ENCODE measurements at regions of chr22 and their contacts with region 1.

Region 1: DNA sequence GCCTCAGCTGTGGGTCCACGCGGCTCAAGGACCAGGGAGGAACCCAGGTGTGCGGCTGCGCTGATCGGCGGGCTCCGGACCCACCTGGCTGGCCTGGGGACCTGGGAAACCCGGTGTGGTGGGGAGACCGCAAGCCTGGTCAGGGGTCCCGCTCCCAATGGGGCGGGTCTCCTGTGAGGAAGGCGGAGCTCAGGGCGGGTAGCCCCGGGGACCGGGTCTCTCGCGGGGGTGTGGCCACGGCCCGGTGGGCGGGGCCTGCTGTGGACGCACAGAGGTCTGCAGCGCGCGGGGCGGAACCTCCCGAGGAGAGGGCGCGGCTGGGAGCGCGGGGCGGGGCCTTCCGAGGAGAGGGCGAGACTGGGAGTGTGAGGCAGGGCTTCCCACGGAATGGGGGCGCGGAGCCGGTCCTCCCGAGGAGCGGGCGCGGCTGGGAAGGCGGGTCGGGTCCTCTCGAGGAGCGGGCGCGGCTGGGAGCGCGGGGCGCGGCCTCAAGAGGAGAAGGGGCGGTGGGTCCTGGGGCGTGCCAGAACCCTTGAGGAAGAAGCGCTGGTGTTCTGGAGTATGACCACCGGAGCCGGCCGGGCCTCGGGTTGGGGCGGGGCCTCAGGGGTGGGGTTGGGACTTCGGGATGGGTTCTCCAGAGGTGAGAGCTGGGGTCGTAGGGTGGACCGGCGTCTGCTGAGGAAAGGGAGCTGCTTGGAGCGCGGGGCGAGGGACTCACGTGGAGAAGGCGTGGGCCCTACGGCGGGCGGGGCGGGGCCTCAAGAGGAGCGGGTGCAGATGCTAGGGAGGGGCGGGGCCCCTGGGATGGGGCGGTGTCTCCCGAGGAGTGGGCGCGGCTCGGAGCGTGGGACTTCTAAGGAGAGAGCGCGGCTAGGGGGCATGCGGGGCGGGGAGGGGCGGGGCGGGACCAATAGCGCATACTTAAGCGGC is 20.8 kb downstream of the DGCR6L start:
- DNase-seq: peak; percentile 85
- H3K4me3 Mint-ChIP-seq: peak overlapping the region; percentile 80
- H3K27ac Mint-ChIP-seq: peak overlapping the region; percentile 48
- H3K4me1 Mint-ChIP-seq: no peaks in the 10 kb centered on the region
- H3K27me3 Mint-ChIP-seq: peaks cover 6% of the 10 kb centered on the region

Region 2: DNA sequence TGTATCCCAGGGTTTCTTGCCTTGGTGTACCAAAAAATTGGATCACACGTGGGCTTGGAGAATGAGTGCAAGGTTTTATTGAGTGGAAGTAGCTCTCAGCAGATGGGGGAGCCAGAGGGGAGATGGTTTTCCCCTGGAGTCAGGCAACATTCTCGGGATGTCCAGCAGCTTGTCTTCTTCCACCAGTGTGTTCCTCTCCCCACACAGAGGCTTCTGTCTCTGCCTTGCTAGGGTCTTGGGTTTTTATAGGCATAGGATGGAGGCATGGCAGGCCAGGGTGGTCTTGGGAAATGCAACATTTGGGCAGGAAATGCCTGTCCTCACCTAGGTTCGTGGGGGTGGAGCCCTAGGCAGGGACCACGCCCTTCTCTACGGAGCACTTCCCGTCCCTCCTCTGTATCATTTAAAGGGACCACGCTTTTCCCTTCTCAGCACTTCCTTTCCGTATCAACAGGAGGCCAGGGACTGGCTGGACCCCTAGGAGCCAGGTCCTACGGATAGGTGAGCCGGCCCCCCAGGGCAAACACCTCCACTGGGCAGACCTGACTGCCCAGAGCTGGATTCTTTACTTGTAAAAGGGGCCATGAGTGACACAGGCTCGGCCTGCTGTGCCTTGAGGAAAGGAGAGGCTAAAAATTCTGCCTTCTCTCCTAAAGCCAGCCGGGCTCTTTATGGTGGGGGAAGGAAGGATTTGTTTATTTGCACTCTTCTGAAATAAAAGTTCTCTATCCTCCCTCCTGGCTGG is 92.9 kb before region 1 on chr22:
- intact Hi-C with region 1: loop called (anchors 1 kb)
- DNase-seq: peak; percentile 69
- H3K4me3 Mint-ChIP-seq: peak overlapping the region; percentile 95
- H3K27ac Mint-ChIP-seq: peak overlapping the region; percentile 90
- H3K4me1 Mint-ChIP-seq: peaks cover 19% of the 10 kb centered on the region
- H3K27me3 Mint-ChIP-seq: no peaks in the 10 kb centered on the region

Region 3: GRCh38 chr22:20268279-20269012 is 30.6 kb before region 1 on chr22 and contains the start of gene RTN4R:
- intact Hi-C with region 1: loop called (anchors 1 kb)
- DNase-seq: peak; percentile 45
- H3K4me3 Mint-ChIP-seq: peak within 1 kb of the TSS; percentile 82
- H3K27ac Mint-ChIP-seq: no peak within 1 kb of the TSS
- H3K4me1 Mint-ChIP-seq: no peaks in the 10 kb centered on the region
- H3K27me3 Mint-ChIP-seq: peaks cover 6% of the 10 kb centered on the region
- total RNA-seq, gene RTN4R: 1.7 and 1.9 TPM in 2 replicates

Region 4: GRCh38 chr22:20319745-20320658 is 20.9 kb after region 1 on chr22 and contains the start of gene DGCR6L:
- intact Hi-C with region 1: loop called (anchors 1 kb)
- DNase-seq: peak; percentile 97
- H3K4me3 Mint-ChIP-seq: peak within 1 kb of the TSS; percentile 92
- H3K27ac Mint-ChIP-seq: peak within 1 kb of the TSS; percentile 86
- H3K4me1 Mint-ChIP-seq: peaks cover 62% of the 10 kb centered on the region
- H3K27me3 Mint-ChIP-seq: no peaks in the 10 kb centered on the region
- total RNA-seq, gene DGCR6L: 35.5 and 40.6 TPM in 2 replicates